Heart left ventricle (tissue), 16 donors: ENCODE measurements at regions of chr4 and their contacts with region 1.

Region 1: GRCh38 chr4:76305971-76306881 is at the start of gene STBD1:
- DNase-seq: peak; percentile 80 to 91 (median 90)
- ATAC-seq: peak; percentile 86 to 89 (median 87)
- H3K4me3 ChIP-seq: peak within 1 kb of the TSS; percentile 47 to 95 (median 82)
- H3K27ac ChIP-seq: peak within 1 kb of the TSS; percentile 80 to 98 (median 92)
- H3K4me1 ChIP-seq: peaks cover 0 to 42% (median 20%) of the 10 kb centered on the region in 12 donors
- H3K27me3 ChIP-seq: no peaks in the 10 kb centered on the region
- CTCF ChIP-seq: peak in 1 of 12 donors; percentile 5
- POLR2A ChIP-seq: peak in 1 of 2 donors; percentile 61
- total RNA-seq, gene STBD1: 16.8 to 48.6 (median 25.5) TPM

Region 2: DNA sequence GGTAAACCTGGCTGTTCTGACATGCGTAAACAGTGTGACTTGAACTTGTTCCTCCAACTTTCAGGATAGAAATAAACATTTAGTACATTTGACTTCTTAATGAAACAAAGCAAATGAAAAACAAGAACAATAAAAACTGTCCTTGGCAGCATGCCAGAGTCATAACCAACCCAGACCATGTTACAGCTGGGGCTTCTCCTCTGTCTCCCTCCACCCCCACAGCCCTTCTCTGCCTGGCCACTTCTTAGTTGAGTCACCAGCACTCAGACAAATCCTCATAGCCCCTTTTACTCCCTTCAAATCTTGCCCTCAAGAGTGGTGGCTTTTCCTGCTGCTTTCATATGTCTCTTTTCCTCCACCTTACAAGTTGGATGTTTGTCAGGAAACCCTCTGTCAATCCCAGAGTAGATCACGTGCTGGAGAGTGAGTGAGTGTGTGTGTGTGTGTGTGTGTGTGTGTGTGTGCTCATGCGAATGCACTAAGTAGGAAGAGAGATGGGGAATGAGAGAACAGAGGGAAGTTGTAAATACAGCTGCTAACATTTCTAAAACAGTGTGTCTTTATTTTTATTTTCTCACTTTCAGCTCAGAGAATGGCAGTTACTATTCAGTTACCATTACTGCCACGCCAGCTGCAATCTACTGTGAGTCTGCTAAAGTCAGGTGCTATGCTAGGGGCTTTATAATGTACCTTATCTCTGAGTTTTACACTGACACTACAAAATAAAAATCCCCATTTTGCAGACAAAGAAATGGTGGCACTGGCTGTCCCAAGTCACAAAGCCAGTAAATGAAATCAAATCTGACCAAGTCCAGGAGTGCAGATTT is 107.6 kb before region 1 on chr4:
- intact Hi-C with region 1: loop called in 2 of 10 experiments (anchors 5 to 10 kb)
- DNase-seq: peak in 4 of 5 donors; percentile 49 to 76 (median 72)
- ATAC-seq: peak; percentile 65 to 83 (median 74)
- H3K4me3 ChIP-seq: peak overlapping the region in 2 of 12 donors; percentile 1 to 5
- H3K27ac ChIP-seq: peak overlapping the region; percentile 43 to 91 (median 67)
- H3K4me1 ChIP-seq: peaks cover 26 to 97% (median 75%) of the 10 kb centered on the region in 12 donors
- H3K27me3 ChIP-seq: no peaks in the 10 kb centered on the region
- CTCF ChIP-seq: no peak
- POLR2A ChIP-seq: no peak

Region 3: GRCh38 chr4:76213415-76214176 is 92.6 kb before region 1 on chr4 and contains the start of gene SCARB2:
- intact Hi-C with region 1: loop called in 5 of 10 experiments (anchors 2 to 10 kb)
- DNase-seq: peak; percentile 91 to 95 (median 93)
- ATAC-seq: peak; percentile 88 to 98 (median 94)
- H3K4me3 ChIP-seq: peak within 1 kb of the TSS; percentile 69 to 94 (median 80)
- H3K27ac ChIP-seq: peak within 1 kb of the TSS; percentile 80 to 99 (median 96)
- H3K4me1 ChIP-seq: peaks cover 19 to 69% (median 52%) of the 10 kb centered on the region in 12 donors
- H3K27me3 ChIP-seq: no peaks in the 10 kb centered on the region
- CTCF ChIP-seq: peak in 1 of 12 donors; percentile 6
- POLR2A ChIP-seq: peak in 1 of 2 donors; percentile 88
- total RNA-seq, gene SCARB2: 84.9 to 208 (median 96.0) TPM

Region 4: GRCh38 chr4:76251441-76252270 is 54.6 kb before region 1 on chr4 and contains the start of gene FAM47E:
- intact Hi-C with region 1: loop called in 2 of 10 experiments (anchors 5 to 10 kb)
- DNase-seq: peak; percentile 71 to 89 (median 87)
- ATAC-seq: peak; percentile 96 to 99 (median 99)
- H3K4me3 ChIP-seq: peak within 1 kb of the TSS; percentile 20 to 73 (median 63)
- H3K27ac ChIP-seq: peak within 1 kb of the TSS in 7 of 12 donors; percentile 4 to 62 (median 46)
- H3K4me1 ChIP-seq: peaks cover 0 to 17% (median 8%) of the 10 kb centered on the region in 12 donors
- H3K27me3 ChIP-seq: peaks cover 0 to 50% (median 0%) of the 10 kb centered on the region in 9 donors
- CTCF ChIP-seq: peak; percentile 9 to 59 (median 38)
- POLR2A ChIP-seq: peak in 1 of 2 donors; percentile 29
- total RNA-seq, gene FAM47E: 0.48 to 4.9 (median 2.5) TPM

Region 5: GRCh38 chr4:76341063-76341462 is 34.8 kb after region 1 on chr4:
- intact Hi-C with region 1: loop called in 1 of 10 experiments (anchors 1 kb)
- DNase-seq: no peak
- ATAC-seq: peak; percentile 74 to 96 (median 90)
- H3K4me3 ChIP-seq: no peak overlapping the region
- H3K27ac ChIP-seq: peak overlapping the region in 8 of 12 donors; percentile 2 to 62 (median 50)
- H3K4me1 ChIP-seq: peaks cover 0 to 18% (median 5%) of the 10 kb centered on the region in 12 donors
- H3K27me3 ChIP-seq: no peaks in the 10 kb centered on the region
- CTCF ChIP-seq: no peak
- POLR2A ChIP-seq: no peak

Region 6: GRCh38 chr4:76377911-76378310 is 71.7 kb after region 1 on chr4:
- intact Hi-C with region 1: loop called in 3 of 10 experiments (anchors 5 to 10 kb)
- DNase-seq: no peak
- ATAC-seq: peak in 2 of 4 donors; percentile 26 to 55
- H3K4me3 ChIP-seq: no peak overlapping the region
- H3K27ac ChIP-seq: no peak overlapping the region
- H3K4me1 ChIP-seq: peaks cover 0 to 9% (median 6%) of the 10 kb centered on the region in 12 donors
- H3K27me3 ChIP-seq: no peaks in the 10 kb centered on the region
- CTCF ChIP-seq: peak in 11 of 12 donors; percentile 19 to 52 (median 41)
- POLR2A ChIP-seq: no peak